ENCODE measurements at regions of chr15 and their contacts with region 1.

Region 1: GRCh38 chr15:45714590-45715488 is 80.0 kb downstream of the SQOR start:
- DNase-seq: peak; percentile 38 to 81
- H3K4me3 ChIP-seq: no peak overlapping the region
- H3K27ac ChIP-seq: no peak overlapping the region
- H3K4me1 ChIP-seq: peaks cover 0 to 2% (median 0%) of the 10 kb centered on the region in 4 experiments; a peak in 2 of 7 replicates
- H3K27me3 ChIP-seq: no peaks in the 10 kb centered on the region
- CTCF ChIP-seq: peak; percentile 88 to 96 (median 93)
- EP300 ChIP-seq: no peak
- POLR2A ChIP-seq: no peak
- RAD21 ChIP-seq: peak; percentile 88 to 89

Region 2: GRCh38 chr15:45510758-45511280 is 204.0 kb before region 1 on chr15:
- CTCF ChIA-PET with region 1: no interaction called
- POLR2A ChIA-PET with region 1: no interaction called
- DNase-seq: no peak
- H3K4me3 ChIP-seq: no peak overlapping the region
- H3K27ac ChIP-seq: no peak overlapping the region
- H3K4me1 ChIP-seq: no peaks in the 10 kb centered on the region
- H3K27me3 ChIP-seq: no peaks in the 10 kb centered on the region; a peak in 1 of 7 replicates
- CTCF ChIP-seq: no peak
- EP300 ChIP-seq: no peak
- POLR2A ChIP-seq: no peak
- RAD21 ChIP-seq: no peak

Region 3: GRCh38 chr15:45732662-45733061 is 17.8 kb after region 1 on chr15:
- CTCF ChIA-PET with region 1: interaction called, 18 read pairs
- POLR2A ChIA-PET with region 1: no interaction called
- DNase-seq: no peak
- H3K4me3 ChIP-seq: no peak overlapping the region
- H3K27ac ChIP-seq: no peak overlapping the region
- H3K4me1 ChIP-seq: no peaks in the 10 kb centered on the region
- H3K27me3 ChIP-seq: no peaks in the 10 kb centered on the region
- CTCF ChIP-seq: no peak
- EP300 ChIP-seq: no peak
- POLR2A ChIP-seq: no peak
- RAD21 ChIP-seq: no peak

Region 4: DNA sequence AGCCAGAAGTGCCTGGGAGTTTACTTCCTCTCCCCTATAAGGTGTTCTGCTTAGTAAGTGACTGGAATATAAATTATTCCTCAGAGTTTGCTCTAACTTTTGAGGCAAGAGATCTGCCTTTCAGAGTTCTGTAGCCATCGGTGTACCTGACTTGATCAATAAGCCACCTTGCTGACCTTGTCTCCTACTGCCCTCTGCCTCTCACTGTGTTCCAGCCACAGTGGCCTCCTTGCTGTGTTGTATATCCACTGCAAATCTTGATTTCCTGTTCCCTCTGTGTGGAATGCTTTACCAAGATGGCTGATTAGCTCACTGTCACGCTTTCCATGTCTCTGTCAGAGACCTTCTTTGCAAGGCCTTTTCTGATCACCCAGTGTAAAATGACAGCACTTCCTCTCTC is 362.4 kb after region 1 on chr15:
- CTCF ChIA-PET with region 1: interaction called, 12 read pairs
- POLR2A ChIA-PET with region 1: no interaction called
- DNase-seq: no peak
- H3K4me3 ChIP-seq: no peak overlapping the region
- H3K27ac ChIP-seq: no peak overlapping the region
- H3K4me1 ChIP-seq: 0 out of 7 replicates have a peak, but pooled peaks cover 0 to 2% (median 0%) of the 10 kb centered on the region in 4 experiments
- H3K27me3 ChIP-seq: no peaks in the 10 kb centered on the region
- CTCF ChIP-seq: peak in 2 of 3 experiments; percentile 5 to 7; a peak in 2 of 4 replicates
- EP300 ChIP-seq: no peak
- POLR2A ChIP-seq: no peak
- RAD21 ChIP-seq: peak; percentile 42 to 44; a peak in 3 of 4 replicates

Measured in H1 (cell line).